ENCODE measurements at regions of chrX and their contacts with region 1.

Region 1: GRCh38 chrX:31747411-31747810 is 675.6 kb upstream of the FTHL17 start:
- DNase-seq: no peak

Region 2: GRCh38 chrX:33457102-33457501 is 1709.7 kb after region 1 on chrX:
- intact Hi-C with region 1: loop called in 1 of 2 experiments (anchors 10 kb)
- DNase-seq: no peak